Caco-2 (cell line): ENCODE measurements at regions of chr3 and their contacts with region 1.

Region 1: DNA sequence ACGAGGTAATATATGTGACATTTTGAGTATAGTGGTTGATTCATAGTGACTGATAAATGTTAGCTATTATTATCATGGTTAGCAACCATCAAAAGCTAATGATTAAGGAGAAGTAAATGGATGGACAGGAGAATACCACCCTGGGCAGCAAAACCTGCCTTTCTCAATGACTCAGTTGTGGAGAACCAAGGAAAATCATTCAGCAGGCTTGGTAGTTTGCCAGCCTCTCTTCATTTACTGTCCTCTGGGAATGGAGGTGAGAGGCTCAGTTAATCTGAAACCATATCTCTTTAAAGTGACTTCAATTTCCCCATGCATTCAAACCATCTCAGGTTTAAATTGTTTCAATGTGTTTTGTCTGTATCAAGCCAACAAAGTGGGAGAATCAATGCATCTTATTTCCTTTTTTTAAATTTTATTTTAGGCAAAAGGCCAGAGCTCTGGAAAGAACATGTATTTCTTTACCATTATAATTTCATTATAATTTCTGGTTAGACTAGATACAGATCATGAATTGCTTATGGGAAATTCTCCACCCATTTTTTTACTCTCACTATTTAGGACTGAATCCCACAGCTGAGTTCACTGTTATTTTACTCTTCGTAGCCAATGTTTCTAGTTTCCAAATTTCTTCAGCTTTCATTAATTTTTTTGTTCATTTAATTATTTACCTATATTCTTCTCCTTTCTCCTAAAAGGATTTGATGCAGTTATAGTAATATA is 2.7 kb downstream of the TM4SF18 start:
- DNase-seq: no peak
- H3K4me3 ChIP-seq: no peak overlapping the region
- H3K4me3 Mint-ChIP-seq: no peak overlapping the region
- H3K27ac Mint-ChIP-seq: no peak overlapping the region
- H3K4me1 ChIP-seq: no peaks in the 10 kb centered on the region
- H3K4me1 Mint-ChIP-seq: no peaks in the 10 kb centered on the region
- H3K27me3 ChIP-seq: no peaks in the 10 kb centered on the region
- H3K27me3 Mint-ChIP-seq: no peaks in the 10 kb centered on the region
- CTCF ChIP-seq: no peak

Region 2: DNA sequence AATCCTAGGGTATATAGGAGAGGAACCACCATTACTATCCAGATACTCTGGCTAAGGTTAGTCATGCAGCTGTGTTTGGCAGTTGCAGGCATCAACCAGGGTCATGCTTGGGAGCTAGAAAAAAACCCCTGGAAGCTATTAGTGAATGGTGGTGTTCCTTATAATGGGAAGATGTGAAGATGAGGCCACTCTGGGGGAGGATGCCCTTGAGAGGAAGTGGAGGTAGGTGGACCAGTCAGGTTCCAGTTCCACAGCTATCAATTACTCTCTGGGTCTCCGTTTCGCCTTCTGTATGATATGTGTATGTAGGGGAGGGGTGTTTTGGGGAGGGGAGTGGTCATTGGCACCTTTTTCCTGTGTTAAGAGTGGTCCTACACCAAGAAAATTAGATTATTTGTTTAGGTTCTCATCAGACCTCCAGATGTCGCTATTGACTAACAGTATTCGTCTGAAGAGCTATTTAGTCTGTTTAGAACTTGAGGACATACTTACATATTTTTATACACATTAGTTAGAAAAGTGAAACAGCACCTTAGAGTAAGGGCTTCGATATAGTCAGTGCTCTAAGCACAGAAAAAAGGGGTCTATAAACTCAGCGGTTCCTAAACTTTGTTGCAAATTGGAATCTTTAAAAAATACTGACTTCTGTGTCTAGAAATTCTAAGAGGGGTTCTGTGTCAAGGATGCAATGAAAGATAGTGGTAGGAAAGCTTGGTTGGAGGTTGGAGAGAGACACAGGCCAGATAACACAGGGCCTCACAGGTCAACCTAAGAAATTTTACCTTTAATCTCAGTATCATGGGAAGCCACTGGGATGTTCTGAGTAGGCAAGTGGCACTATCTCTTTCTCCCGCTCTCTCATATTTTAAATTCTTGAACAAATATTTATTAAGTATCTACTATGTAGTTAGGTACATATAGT is 210.5 kb before region 1 on chr3:
- CTCF ChIA-PET with region 1: interaction called, 4 read pairs
- POLR2A ChIA-PET with region 1: interaction called, 10 read pairs
- intact Hi-C with region 1: loop called (anchors 1 kb)
- DNase-seq: peak in 1 of 2 experiments; percentile 51
- H3K4me3 ChIP-seq: no peak overlapping the region
- H3K4me3 Mint-ChIP-seq: no peak overlapping the region
- H3K27ac Mint-ChIP-seq: no peak overlapping the region
- H3K4me1 ChIP-seq: peaks cover 4% of the 10 kb centered on the region; the same call in 1 of the 2 replicates
- H3K4me1 Mint-ChIP-seq: peaks cover 14% of the 10 kb centered on the region
- H3K27me3 ChIP-seq: no peaks in the 10 kb centered on the region
- H3K27me3 Mint-ChIP-seq: no peaks in the 10 kb centered on the region
- CTCF ChIP-seq: peak; percentile 42 to 64